ENCODE measurements at regions of chr11 and their contacts with region 1.

Region 1: GRCh38 chr11:11157185-11157584 is 195.9 kb downstream of the CSNK2A3 start:
- DNase-seq: peak; percentile 54
- H3K4me3 ChIP-seq: no peak overlapping the region
- H3K27ac ChIP-seq: no peak overlapping the region
- H3K4me1 ChIP-seq: no peaks in the 10 kb centered on the region
- H3K27me3 ChIP-seq: no peaks in the 10 kb centered on the region
- CTCF ChIP-seq: peak; percentile 55

Region 2: GRCh38 chr11:10405855-10406592 is 751.2 kb before region 1 on chr11:
- CTCF ChIA-PET with region 1: no interaction called
- POLR2A ChIA-PET with region 1: no interaction called
- intact Hi-C with region 1: no loop called
- DNase-seq: peak; percentile 94
- H3K4me3 ChIP-seq: no peak overlapping the region
- H3K27ac ChIP-seq: peak overlapping the region; percentile 38
- H3K4me1 ChIP-seq: peaks cover 21% of the 10 kb centered on the region
- H3K27me3 ChIP-seq: no peaks in the 10 kb centered on the region
- CTCF ChIP-seq: peak; percentile 75

Region 3: GRCh38 chr11:11036848-11037732 is 120.1 kb before region 1 on chr11:
- CTCF ChIA-PET with region 1: no interaction called
- POLR2A ChIA-PET with region 1: no interaction called
- intact Hi-C with region 1: loop called (anchors 5 kb)
- DNase-seq: peak; percentile 35
- H3K4me3 ChIP-seq: no peak overlapping the region
- H3K27ac ChIP-seq: no peak overlapping the region
- H3K4me1 ChIP-seq: no peaks in the 10 kb centered on the region
- H3K27me3 ChIP-seq: no peaks in the 10 kb centered on the region
- CTCF ChIP-seq: peak; percentile 56

Measured in A673 (cell line).